Activated B cell treated with CpG ODN at 0.5 μM for 24 hours (primary cell): ENCODE measurements at regions of chrX and their contacts with region 1.

Region 1: DNA sequence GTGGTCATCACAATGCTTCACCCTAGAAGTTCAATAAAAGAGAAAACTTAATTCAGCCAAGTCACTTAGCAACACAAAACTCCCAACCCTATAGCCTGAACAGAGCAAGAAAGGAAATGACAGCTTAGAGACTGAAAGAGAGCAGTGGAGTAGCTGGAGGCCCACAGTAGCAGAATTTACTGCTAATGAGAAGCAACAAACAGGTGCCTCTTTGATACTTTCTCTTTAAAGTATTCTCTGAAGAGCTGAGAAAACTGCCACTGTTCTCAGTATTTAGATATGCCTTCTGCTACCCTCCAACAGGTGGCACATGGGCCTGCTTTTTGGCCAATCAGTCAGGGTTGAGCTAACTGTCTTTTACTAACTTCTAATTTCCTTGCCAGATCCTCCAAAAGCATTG is 240.0 kb downstream of the GPC3 start:
- DNase-seq: no peak
- ATAC-seq: peak; percentile 37
- H3K4me3 Mint-ChIP-seq: no peak overlapping the region
- H3K27ac Mint-ChIP-seq: no peak overlapping the region
- H3K4me1 Mint-ChIP-seq: peaks cover 3% of the 10 kb centered on the region
- H3K27me3 Mint-ChIP-seq: no peaks in the 10 kb centered on the region
- CTCF ChIP-seq: no peak

Region 2: DNA sequence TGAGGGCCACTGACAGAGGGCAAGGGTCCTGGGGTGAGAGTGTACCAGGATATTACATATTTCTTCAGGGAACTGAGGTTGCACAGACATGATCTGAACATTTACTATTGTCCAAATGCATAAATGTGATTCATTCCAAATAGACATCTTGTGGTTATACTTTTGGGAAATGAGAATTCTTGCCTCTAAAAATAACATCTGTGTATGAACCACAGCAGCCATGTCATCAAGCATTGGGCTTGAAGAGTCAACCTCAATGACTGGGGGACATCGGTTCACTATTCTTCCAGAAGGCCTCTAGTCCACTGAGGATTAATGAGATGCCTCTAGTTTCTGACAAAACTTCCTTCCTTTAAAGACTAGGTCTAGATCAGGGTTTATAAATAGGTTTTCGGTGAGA is 136.9 kb before region 1 on chrX:
- CTCF ChIA-PET with region 1: no interaction called
- POLR2A ChIA-PET with region 1: no interaction called
- intact Hi-C with region 1: no loop called
- DNase-seq: no peak
- ATAC-seq: no peak
- H3K4me3 Mint-ChIP-seq: no peak overlapping the region
- H3K27ac Mint-ChIP-seq: no peak overlapping the region
- H3K4me1 Mint-ChIP-seq: no peaks in the 10 kb centered on the region
- H3K27me3 Mint-ChIP-seq: no peaks in the 10 kb centered on the region
- CTCF ChIP-seq: no peak

Region 3: GRCh38 chrX:133726662-133727061 is 18.7 kb before region 1 on chrX:
- CTCF ChIA-PET with region 1: no interaction called
- POLR2A ChIA-PET with region 1: no interaction called
- intact Hi-C with region 1: no loop called
- DNase-seq: no peak
- ATAC-seq: no peak
- H3K4me3 Mint-ChIP-seq: no peak overlapping the region
- H3K27ac Mint-ChIP-seq: no peak overlapping the region
- H3K4me1 Mint-ChIP-seq: peaks cover 2% of the 10 kb centered on the region
- H3K27me3 Mint-ChIP-seq: peaks cover 2% of the 10 kb centered on the region
- CTCF ChIP-seq: no peak

Region 4: DNA sequence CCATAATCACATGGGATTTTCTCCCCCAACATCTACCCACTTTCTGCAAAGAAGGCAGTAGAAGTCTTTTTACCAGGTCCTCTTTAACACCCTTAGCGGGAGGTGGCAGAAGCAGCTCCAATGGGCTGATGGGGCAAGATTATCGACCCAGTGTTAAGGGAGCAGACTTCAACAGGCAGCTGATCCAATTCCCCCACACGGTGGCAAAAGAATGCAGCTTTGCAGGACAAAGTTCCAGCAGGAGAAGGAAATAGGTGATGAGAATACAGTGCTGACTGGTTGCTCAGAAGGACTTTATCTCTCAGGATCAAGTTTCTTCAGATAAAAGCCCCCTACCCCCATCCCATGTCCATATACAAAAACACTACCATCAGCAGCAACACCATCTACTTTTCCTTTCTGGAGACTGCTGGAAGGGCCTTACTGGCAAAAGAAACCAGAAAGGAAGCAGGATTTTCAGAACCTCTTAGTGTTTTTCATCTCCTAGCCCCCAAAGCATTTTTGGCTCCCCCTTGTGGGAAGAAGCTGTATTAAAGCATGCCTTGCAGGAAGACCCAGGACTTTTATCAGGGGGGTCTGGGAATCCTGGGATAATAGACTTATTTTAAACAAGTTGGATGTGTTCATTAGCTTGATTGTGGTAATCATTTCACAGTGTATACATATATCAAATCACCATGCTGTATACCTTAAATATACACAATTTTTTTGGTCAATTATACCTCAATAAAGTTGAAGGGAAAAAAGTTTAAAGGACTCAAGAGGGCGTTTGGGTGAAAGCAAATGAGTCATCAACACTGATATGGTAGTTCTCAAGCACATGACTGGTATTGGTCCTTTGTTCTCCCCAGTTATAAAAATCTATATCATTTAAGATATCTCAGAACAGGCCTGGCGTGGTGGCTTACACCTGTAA is 93.7 kb after region 1 on chrX:
- CTCF ChIA-PET with region 1: interaction called, 3 read pairs
- POLR2A ChIA-PET with region 1: no interaction called
- intact Hi-C with region 1: loop called (anchors 1 kb)
- DNase-seq: no peak
- ATAC-seq: no peak
- H3K4me3 Mint-ChIP-seq: no peak overlapping the region
- H3K27ac Mint-ChIP-seq: peak overlapping the region; percentile 12
- H3K4me1 Mint-ChIP-seq: peaks cover 8% of the 10 kb centered on the region
- H3K27me3 Mint-ChIP-seq: no peaks in the 10 kb centered on the region
- CTCF ChIP-seq: no peak

Region 5: GRCh38 chrX:134026565-134027311 is 281.4 kb after region 1 on chrX:
- CTCF ChIA-PET with region 1: interaction called, 3 read pairs
- POLR2A ChIA-PET with region 1: no interaction called
- intact Hi-C with region 1: loop called (anchors 5 kb)
- DNase-seq: no peak
- ATAC-seq: no peak
- H3K4me3 Mint-ChIP-seq: no peak overlapping the region
- H3K27ac Mint-ChIP-seq: no peak overlapping the region
- H3K4me1 Mint-ChIP-seq: no peaks in the 10 kb centered on the region
- H3K27me3 Mint-ChIP-seq: peaks cover 6% of the 10 kb centered on the region
- CTCF ChIP-seq: no peak

Region 6: GRCh38 chrX:134144231-134144630 is 398.9 kb after region 1 on chrX:
- CTCF ChIA-PET with region 1: no interaction called
- POLR2A ChIA-PET with region 1: no interaction called
- intact Hi-C with region 1: loop called (anchors 5 kb)
- DNase-seq: no peak
- ATAC-seq: no peak
- H3K4me3 Mint-ChIP-seq: no peak overlapping the region
- H3K27ac Mint-ChIP-seq: no peak overlapping the region
- H3K4me1 Mint-ChIP-seq: no peaks in the 10 kb centered on the region
- H3K27me3 Mint-ChIP-seq: peaks cover 6% of the 10 kb centered on the region
- CTCF ChIP-seq: no peak